Naive thymus-derived CD4-positive, alpha-beta T cell (primary cell): ENCODE measurements at regions of chr12 and their contacts with region 1.

Region 1: GRCh38 chr12:56688129-56688845 is at the start of gene PTGES3:
- DNase-seq: peak; percentile 95 to 98 (median 98)
- ATAC-seq: peak; percentile 87
- H3K4me3 ChIP-seq: peak within 1 kb of the TSS; percentile 80
- H3K4me3 Mint-ChIP-seq: peak within 1 kb of the TSS; percentile 97 to 100 (median 100)
- H3K27ac ChIP-seq: peak within 1 kb of the TSS; percentile 98
- H3K27ac Mint-ChIP-seq: peak within 1 kb of the TSS; percentile 95 to 100 (median 99)
- H3K4me1 ChIP-seq: peaks cover 12 to 19% of the 10 kb centered on the region in 2 donors
- H3K4me1 Mint-ChIP-seq: peaks cover 20 to 41% (median 34%) of the 10 kb centered on the region in 7 donors
- H3K27me3 ChIP-seq: no peaks in the 10 kb centered on the region
- H3K27me3 Mint-ChIP-seq: no peaks in the 10 kb centered on the region
- total RNA-seq, gene PTGES3: 111 to 229 (median 153) TPM

Region 2: GRCh38 chr12:56041552-56042429 is 646.5 kb before region 1 on chr12 and contains the start of gene RPS26:
- CTCF ChIA-PET with region 1: no interaction called
- POLR2A ChIA-PET with region 1: no interaction called
- intact Hi-C with region 1: loop called in 1 of 2 experiments (anchors 5 kb)
- DNase-seq: peak; percentile 75 to 97 (median 94)
- ATAC-seq: peak; percentile 94
- H3K4me3 ChIP-seq: peak within 1 kb of the TSS; percentile 100
- H3K4me3 Mint-ChIP-seq: peak within 1 kb of the TSS; percentile 91 to 100 (median 98)
- H3K27ac ChIP-seq: peak within 1 kb of the TSS; percentile 84
- H3K27ac Mint-ChIP-seq: peak within 1 kb of the TSS; percentile 94 to 99 (median 97)
- H3K4me1 ChIP-seq: peaks cover 16 to 19% of the 10 kb centered on the region in 2 donors
- H3K4me1 Mint-ChIP-seq: peaks cover 14 to 56% (median 34%) of the 10 kb centered on the region in 7 donors
- H3K27me3 ChIP-seq: no peaks in the 10 kb centered on the region
- H3K27me3 Mint-ChIP-seq: no peaks in the 10 kb centered on the region
- total RNA-seq, gene RPS26: 40.8 to 64.5 (median 46.4) TPM

Region 3: GRCh38 chr12:56359851-56360767 is 328.2 kb before region 1 on chr12 and contains the start of gene STAT2:
- CTCF ChIA-PET with region 1: no interaction called
- POLR2A ChIA-PET with region 1: interaction called, 4 read pairs
- intact Hi-C with region 1: loop called in 1 of 2 experiments (anchors 1 kb)
- DNase-seq: peak; percentile 94 to 100 (median 99)
- ATAC-seq: peak; percentile 97
- H3K4me3 ChIP-seq: peak within 1 kb of the TSS; percentile 89
- H3K4me3 Mint-ChIP-seq: peak within 1 kb of the TSS; percentile 83 to 99 (median 96)
- H3K27ac ChIP-seq: peak within 1 kb of the TSS; percentile 79
- H3K27ac Mint-ChIP-seq: peak within 1 kb of the TSS; percentile 90 to 98 (median 96)
- H3K4me1 ChIP-seq: peaks cover 16 to 17% of the 10 kb centered on the region in 2 donors
- H3K4me1 Mint-ChIP-seq: peaks cover 14 to 40% (median 27%) of the 10 kb centered on the region in 7 donors
- H3K27me3 ChIP-seq: no peaks in the 10 kb centered on the region
- H3K27me3 Mint-ChIP-seq: no peaks in the 10 kb centered on the region
- total RNA-seq, gene STAT2: 119 to 291 (median 182) TPM

Region 4: GRCh38 chr12:56645717-56646446 is 42.4 kb before region 1 on chr12 and contains the start of gene ATP5F1B:
- CTCF ChIA-PET with region 1: interaction called, 3 read pairs
- POLR2A ChIA-PET with region 1: interaction called, 84 read pairs
- intact Hi-C with region 1: loop called (anchors 1 kb)
- DNase-seq: peak; percentile 65 to 97 (median 93)
- ATAC-seq: peak; percentile 97
- H3K4me3 ChIP-seq: peak within 1 kb of the TSS; percentile 83
- H3K4me3 Mint-ChIP-seq: peak within 1 kb of the TSS; percentile 82 to 98 (median 94)
- H3K27ac ChIP-seq: peak within 1 kb of the TSS; percentile 93
- H3K27ac Mint-ChIP-seq: peak within 1 kb of the TSS; percentile 97 to 100 (median 99)
- H3K4me1 ChIP-seq: peaks cover 4 to 21% of the 10 kb centered on the region in 2 donors
- H3K4me1 Mint-ChIP-seq: peaks cover 17 to 39% (median 34%) of the 10 kb centered on the region in 7 donors
- H3K27me3 ChIP-seq: no peaks in the 10 kb centered on the region
- H3K27me3 Mint-ChIP-seq: no peaks in the 10 kb centered on the region
- total RNA-seq, gene ATP5F1B: 217 to 476 (median 267) TPM

Region 5: DNA sequence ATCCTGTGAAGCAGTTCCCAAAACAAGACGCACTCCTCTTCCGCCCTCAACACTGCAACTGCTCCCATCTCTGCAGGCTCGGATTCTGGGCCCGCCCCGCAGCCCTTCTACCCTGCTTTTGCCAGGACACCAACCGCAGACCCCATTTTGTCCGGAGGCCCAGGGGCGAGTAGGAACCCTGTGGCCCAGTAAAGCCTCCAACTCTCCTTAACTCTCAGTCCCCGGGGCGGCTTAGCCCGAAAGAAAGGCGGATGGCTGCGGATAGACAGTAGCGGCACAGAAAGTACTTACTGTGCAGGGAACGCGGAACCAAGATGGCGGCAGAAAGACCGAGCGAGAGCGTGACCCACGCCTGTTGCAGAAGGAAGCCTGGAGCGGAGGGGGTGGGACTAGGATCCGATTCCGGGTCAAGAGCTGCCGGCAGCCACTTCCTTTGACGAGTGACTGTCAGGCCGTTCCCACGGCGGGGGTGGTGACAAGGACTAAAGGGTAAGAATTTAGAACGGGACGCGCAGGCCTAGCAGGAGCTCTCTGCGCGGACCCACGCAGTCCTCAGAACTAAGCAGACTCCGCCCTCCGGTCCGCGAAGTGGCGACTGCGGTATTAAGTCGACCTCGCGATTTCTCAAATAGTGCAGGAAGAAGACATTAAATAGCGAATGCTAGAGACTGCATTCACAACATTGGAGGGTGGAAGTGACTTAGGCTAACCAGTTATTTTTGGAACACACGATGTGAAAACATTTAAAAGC is 36.9 kb after region 1 on chr12 and contains the start of gene NACA:
- CTCF ChIA-PET with region 1: interaction called, 9 read pairs
- POLR2A ChIA-PET with region 1: interaction called, 104 read pairs
- intact Hi-C with region 1: loop called (anchors 1 kb)
- DNase-seq: peak; percentile 85 to 99 (median 96)
- ATAC-seq: peak; percentile 95
- H3K4me3 ChIP-seq: peak within 1 kb of the TSS; percentile 100
- H3K4me3 Mint-ChIP-seq: peak within 1 kb of the TSS; percentile 94 to 100 (median 97)
- H3K27ac ChIP-seq: peak within 1 kb of the TSS; percentile 87
- H3K27ac Mint-ChIP-seq: peak within 1 kb of the TSS; percentile 94 to 100 (median 98)
- H3K4me1 ChIP-seq: peaks cover 40 to 43% of the 10 kb centered on the region in 2 donors
- H3K4me1 Mint-ChIP-seq: peaks cover 39 to 53% (median 49%) of the 10 kb centered on the region in 7 donors
- H3K27me3 ChIP-seq: no peaks in the 10 kb centered on the region
- H3K27me3 Mint-ChIP-seq: no peaks in the 10 kb centered on the region
- total RNA-seq, gene NACA: 834 to 1,486 (median 1,355) TPM

Region 6: DNA sequence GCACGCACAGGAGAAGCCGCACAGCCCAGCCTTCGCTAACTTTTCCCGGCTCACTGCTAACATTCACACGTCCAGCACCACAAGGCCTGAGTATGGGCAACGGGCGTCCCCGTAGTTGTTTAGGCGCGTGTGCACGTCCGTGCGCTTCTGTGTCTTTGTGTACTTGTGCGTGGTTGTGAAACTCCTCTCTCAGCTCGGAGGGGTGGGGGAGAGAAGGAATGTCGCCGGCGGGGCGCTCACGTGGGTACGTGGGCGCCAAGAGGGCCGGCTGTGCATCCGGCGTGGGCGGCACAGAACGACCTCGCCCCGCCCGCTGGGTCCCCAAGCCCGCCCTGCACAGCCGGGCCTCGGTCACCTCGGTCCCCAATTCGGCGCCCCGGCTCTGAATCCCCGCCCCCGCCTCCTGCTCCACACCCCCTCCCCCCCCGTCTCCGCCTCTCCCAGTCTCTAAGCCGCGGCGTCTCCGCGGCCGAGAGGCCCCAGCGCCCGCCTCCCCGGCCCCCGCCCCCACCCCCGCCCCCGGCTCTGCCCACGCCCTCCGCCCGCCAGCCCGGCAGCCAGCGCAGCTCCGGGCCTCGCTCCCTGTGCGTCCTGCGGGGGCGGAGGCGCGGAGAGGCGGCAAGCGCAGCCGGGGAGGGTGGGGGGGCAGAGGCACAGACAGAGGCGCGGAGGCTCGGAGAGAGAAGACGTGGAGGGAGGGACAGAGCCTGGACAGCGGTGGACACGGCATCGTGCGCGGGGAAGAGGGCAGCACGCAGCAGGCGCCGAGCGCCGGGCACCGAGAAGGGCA is 400.4 kb after region 1 on chr12 and contains the start of gene NAB2:
- CTCF ChIA-PET with region 1: no interaction called
- POLR2A ChIA-PET with region 1: no interaction called
- intact Hi-C with region 1: loop called (anchors 1 kb)
- DNase-seq: peak; percentile 79 to 91 (median 88)
- ATAC-seq: peak; percentile 84
- H3K4me3 ChIP-seq: peak within 1 kb of the TSS; percentile 94
- H3K4me3 Mint-ChIP-seq: peak within 1 kb of the TSS; percentile 94 to 98 (median 96)
- H3K27ac ChIP-seq: peak within 1 kb of the TSS; percentile 100
- H3K27ac Mint-ChIP-seq: peak within 1 kb of the TSS; percentile 94 to 99 (median 97)
- H3K4me1 ChIP-seq: peaks cover 23 to 46% of the 10 kb centered on the region in 2 donors
- H3K4me1 Mint-ChIP-seq: peaks cover 40 to 68% (median 58%) of the 10 kb centered on the region in 7 donors
- H3K27me3 ChIP-seq: no peaks in the 10 kb centered on the region
- H3K27me3 Mint-ChIP-seq: no peaks in the 10 kb centered on the region
- total RNA-seq, gene NAB2: 5.7 to 22.4 (median 15.5) TPM